Endothelial cell of umbilical vein (primary cell): ENCODE measurements at regions of chr19 and their contacts with region 1.

Region 1: DNA sequence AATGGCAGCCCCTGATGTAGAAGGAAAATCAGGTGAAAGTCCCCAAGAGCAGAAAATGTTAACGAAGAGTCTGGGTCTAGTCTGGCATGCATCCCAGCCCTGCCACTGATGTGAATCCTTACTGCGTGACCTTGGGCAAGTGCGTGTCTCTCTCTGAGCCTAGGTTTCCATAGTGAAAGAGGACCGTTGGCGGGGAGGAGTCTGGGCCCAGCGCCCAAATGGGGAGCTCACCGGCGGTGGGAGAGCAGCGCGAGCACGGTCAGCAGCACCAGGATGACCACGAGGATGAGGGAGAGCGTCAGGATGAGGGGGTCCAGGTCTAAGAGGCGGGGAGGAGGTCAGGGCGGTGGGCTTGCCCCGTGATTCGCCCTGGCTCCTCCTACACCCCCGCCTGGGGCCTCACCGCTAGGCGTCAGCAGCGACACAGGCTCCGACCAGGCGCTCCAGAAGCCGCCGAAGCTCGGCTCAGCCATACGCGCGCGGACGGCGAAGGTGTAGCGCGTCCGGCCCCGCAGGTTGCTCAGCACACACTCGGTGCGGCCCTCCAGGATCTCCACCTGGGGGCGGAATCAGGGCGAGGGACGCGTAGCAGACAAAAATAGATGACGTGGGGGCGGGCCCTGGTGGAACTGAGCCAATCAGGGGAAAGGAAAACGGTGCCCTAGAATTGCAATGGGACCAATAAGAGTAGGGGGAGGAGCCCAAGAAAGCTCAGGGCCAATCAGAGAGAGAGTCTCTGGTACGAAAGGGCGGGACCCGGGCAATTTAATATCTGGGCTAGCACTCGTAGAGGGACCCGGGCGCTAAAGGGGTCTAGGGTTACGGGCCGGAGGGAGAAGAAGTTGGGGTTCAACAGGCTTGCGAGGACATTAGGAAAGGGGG is 3.2 kb downstream of the EPOR start:
- DNase-seq: peak; percentile 95
- H3K4me3 ChIP-seq: peak overlapping the region; percentile 47 to 61 (median 47)
- H3K27ac ChIP-seq: peak overlapping the region; percentile 66
- H3K4me1 ChIP-seq: peaks cover 44% of the 10 kb centered on the region
- H3K27me3 ChIP-seq: no peaks in the 10 kb centered on the region
- CTCF ChIP-seq: peak; percentile 71 to 86
- POLR2A ChIP-seq: peak; percentile 36

Region 2: GRCh38 chr19:10551698-10552301 is 829.1 kb before region 1 on chr19:
- CTCF ChIA-PET with region 1: no interaction called
- POLR2A ChIA-PET with region 1: no interaction called
- dilution Hi-C with region 1: no loop called
- intact Hi-C with region 1: no loop called
- DNase-seq: no peak
- H3K4me3 ChIP-seq: no peak overlapping the region
- H3K27ac ChIP-seq: no peak overlapping the region
- H3K4me1 ChIP-seq: no peaks in the 10 kb centered on the region
- H3K27me3 ChIP-seq: no peaks in the 10 kb centered on the region
- CTCF ChIP-seq: no peak
- POLR2A ChIP-seq: no peak

Region 3: GRCh38 chr19:11018179-11018578 is 362.7 kb before region 1 on chr19:
- CTCF ChIA-PET with region 1: no interaction called
- POLR2A ChIA-PET with region 1: no interaction called
- dilution Hi-C with region 1: no loop called
- intact Hi-C with region 1: no loop called
- DNase-seq: no peak
- H3K4me3 ChIP-seq: no peak overlapping the region
- H3K27ac ChIP-seq: no peak overlapping the region
- H3K4me1 ChIP-seq: no peaks in the 10 kb centered on the region
- H3K27me3 ChIP-seq: no peaks in the 10 kb centered on the region
- CTCF ChIP-seq: no peak
- POLR2A ChIP-seq: no peak

Region 4: GRCh38 chr19:11346092-11346940 is 34.6 kb before region 1 on chr19 and contains the starts of genes CCDC159 and TMEM205:
- CTCF ChIA-PET with region 1: interaction called, 11 read pairs
- POLR2A ChIA-PET with region 1: interaction called, 4 read pairs
- dilution Hi-C with region 1: no loop called
- intact Hi-C with region 1: loop called (anchors 1 kb)
- DNase-seq: peak; percentile 99
- H3K4me3 ChIP-seq: peak within 1 kb of the TSS; percentile 36 to 93 (median 72)
- H3K27ac ChIP-seq: peak within 1 kb of the TSS; percentile 48
- H3K4me1 ChIP-seq: peaks cover 21% of the 10 kb centered on the region
- H3K27me3 ChIP-seq: no peaks in the 10 kb centered on the region
- CTCF ChIP-seq: no peak
- POLR2A ChIP-seq: peak; percentile 79
- total RNA-seq, gene CCDC159: 30.3 and 31.6 TPM in 2 replicates
- total RNA-seq, gene TMEM205: 57.3 and 58.9 TPM in 2 replicates

Region 5: GRCh38 chr19:11367528-11367927 is 13.4 kb before region 1 on chr19:
- CTCF ChIA-PET with region 1: interaction called, 19 read pairs
- POLR2A ChIA-PET with region 1: interaction called, 3 read pairs
- dilution Hi-C with region 1: no loop called
- intact Hi-C with region 1: no loop called
- DNase-seq: no peak
- H3K4me3 ChIP-seq: no peak overlapping the region
- H3K27ac ChIP-seq: no peak overlapping the region
- H3K4me1 ChIP-seq: no peaks in the 10 kb centered on the region
- H3K27me3 ChIP-seq: no peaks in the 10 kb centered on the region
- CTCF ChIP-seq: no peak
- POLR2A ChIP-seq: no peak

Region 6: DNA sequence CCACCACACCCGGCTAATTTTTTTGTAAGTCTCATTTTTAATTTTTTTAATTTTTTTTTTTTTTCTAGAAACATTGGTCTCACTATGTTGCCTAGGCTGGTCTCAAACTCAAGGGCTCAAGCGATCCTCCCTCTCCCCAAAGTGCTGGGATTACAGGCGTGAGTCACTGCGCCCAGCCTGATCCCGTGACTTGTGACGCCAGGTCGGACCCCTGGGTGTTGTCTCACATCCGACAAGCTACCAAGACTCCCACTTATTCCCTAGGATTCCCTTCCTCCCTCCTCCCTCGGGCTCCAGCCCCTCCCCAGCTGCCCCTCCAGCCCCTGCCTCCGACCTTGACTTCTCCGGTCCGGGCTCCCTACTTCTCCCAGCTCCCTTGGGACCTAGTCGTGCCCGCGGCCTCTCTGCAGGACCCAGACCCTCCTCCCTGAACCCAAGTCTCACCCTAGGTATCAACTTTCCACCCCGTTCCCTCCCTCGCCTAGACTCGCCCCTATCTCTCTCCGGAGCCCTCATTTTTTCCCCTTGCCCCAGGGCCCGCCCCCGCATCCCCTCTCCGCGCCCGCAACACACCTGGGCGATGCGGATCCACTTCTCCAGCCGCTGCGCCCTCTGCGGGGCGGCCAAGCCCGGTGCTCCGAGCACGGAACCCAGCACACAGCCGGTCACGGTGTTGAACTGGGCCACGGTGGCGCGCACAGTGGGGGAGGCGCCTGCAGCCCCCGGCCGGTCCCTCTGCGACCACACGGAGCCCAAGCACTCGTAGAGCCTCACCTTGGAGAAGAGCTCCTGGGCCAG is 25.2 kb after region 1 on chr19:
- CTCF ChIA-PET with region 1: interaction called, 14 read pairs
- POLR2A ChIA-PET with region 1: no interaction called
- dilution Hi-C with region 1: no loop called
- intact Hi-C with region 1: loop called (anchors 2 kb)
- DNase-seq: no peak
- H3K4me3 ChIP-seq: no peak overlapping the region
- H3K27ac ChIP-seq: no peak overlapping the region
- H3K4me1 ChIP-seq: no peaks in the 10 kb centered on the region
- H3K27me3 ChIP-seq: no peaks in the 10 kb centered on the region
- CTCF ChIP-seq: peak in 1 of 2 donors; percentile 53
- POLR2A ChIP-seq: no peak

Region 7: DNA sequence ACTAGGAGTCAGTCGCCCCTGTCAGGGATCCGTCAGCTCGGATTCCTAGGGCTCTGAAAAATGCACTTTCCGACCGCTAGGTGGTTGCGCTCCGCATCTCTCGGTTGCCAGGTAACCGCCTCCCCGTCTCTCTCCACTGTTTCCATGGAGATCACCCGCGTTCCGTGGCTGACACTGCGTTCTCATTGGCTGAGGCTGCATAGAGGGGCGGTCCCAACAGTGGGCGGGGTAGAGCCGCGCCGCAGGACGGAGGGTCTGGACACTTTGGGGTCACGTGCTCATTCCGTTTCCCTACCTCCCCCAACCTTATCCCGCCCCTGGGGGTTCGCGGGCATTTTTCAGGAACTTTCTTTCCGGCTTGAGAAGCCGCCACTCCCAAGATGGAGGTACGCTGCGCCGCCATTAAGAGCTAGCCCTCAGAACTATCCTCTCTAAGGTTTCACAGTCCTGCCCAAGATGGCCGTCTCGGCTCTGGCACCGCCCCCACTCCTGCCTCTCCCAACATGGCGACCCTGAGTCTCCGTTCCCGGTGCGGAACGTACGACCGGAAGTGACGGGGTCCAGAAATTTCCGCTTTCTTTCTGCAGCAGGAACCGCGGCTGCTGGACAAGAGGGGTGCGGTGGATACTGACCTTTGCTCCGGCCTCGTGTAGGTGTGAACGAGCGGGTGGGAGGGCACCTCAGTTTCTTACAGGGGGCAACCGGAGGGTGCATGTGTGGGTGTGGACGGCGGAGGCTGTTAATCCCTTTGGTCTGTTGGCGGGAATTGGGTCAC is 54.4 kb after region 1 on chr19 and contains the starts of genes ODAD3 and PRKCSH:
- CTCF ChIA-PET with region 1: interaction called, 16 read pairs
- POLR2A ChIA-PET with region 1: no interaction called
- dilution Hi-C with region 1: no loop called
- intact Hi-C with region 1: loop called (anchors 1 kb)
- DNase-seq: peak; percentile 100
- H3K4me3 ChIP-seq: peak within 1 kb of the TSS; percentile 71 to 88 (median 82)
- H3K27ac ChIP-seq: peak within 1 kb of the TSS; percentile 88
- H3K4me1 ChIP-seq: peaks cover 12% of the 10 kb centered on the region
- H3K27me3 ChIP-seq: no peaks in the 10 kb centered on the region
- CTCF ChIP-seq: peak; percentile 86 to 89
- POLR2A ChIP-seq: peak; percentile 83
- total RNA-seq, gene ODAD3: 0.97 TPM in 1 of 2 replicates, not detected in the other
- total RNA-seq, gene PRKCSH: 387 and 425 TPM in 2 replicates

Region 8: GRCh38 chr19:11482384-11483050 is 101.6 kb after region 1 on chr19:
- CTCF ChIA-PET with region 1: interaction called, 17 read pairs
- POLR2A ChIA-PET with region 1: interaction called, 4 read pairs
- dilution Hi-C with region 1: no loop called
- intact Hi-C with region 1: loop called (anchors 1 kb)
- DNase-seq: peak; percentile 78
- H3K4me3 ChIP-seq: peak overlapping the region in 1 of 3 experiments; percentile 27
- H3K27ac ChIP-seq: no peak overlapping the region
- H3K4me1 ChIP-seq: peaks cover 3% of the 10 kb centered on the region
- H3K27me3 ChIP-seq: peaks cover 13 to 25% of the 10 kb centered on the region in 2 experiments
- CTCF ChIP-seq: peak; percentile 94 to 95
- POLR2A ChIP-seq: no peak

Region 9: GRCh38 chr19:11505032-11505503 is 124.2 kb after region 1 on chr19:
- CTCF ChIA-PET with region 1: no interaction called
- POLR2A ChIA-PET with region 1: no interaction called
- dilution Hi-C with region 1: no loop called
- intact Hi-C with region 1: no loop called
- DNase-seq: peak; percentile 98
- H3K4me3 ChIP-seq: peak overlapping the region; percentile 44 to 71 (median 71)
- H3K27ac ChIP-seq: peak overlapping the region; percentile 81
- H3K4me1 ChIP-seq: peaks cover 10% of the 10 kb centered on the region
- H3K27me3 ChIP-seq: no peaks in the 10 kb centered on the region
- CTCF ChIP-seq: no peak
- POLR2A ChIP-seq: no peak

Region 10: GRCh38 chr19:11519138-11519537 is 138.2 kb after region 1 on chr19:
- CTCF ChIA-PET with region 1: no interaction called
- POLR2A ChIA-PET with region 1: no interaction called
- dilution Hi-C with region 1: no loop called
- intact Hi-C with region 1: no loop called
- DNase-seq: no peak
- H3K4me3 ChIP-seq: no peak overlapping the region
- H3K27ac ChIP-seq: no peak overlapping the region
- H3K4me1 ChIP-seq: no peaks in the 10 kb centered on the region
- H3K27me3 ChIP-seq: no peaks in the 10 kb centered on the region
- CTCF ChIP-seq: no peak
- POLR2A ChIP-seq: no peak